BJ (cell line): ENCODE measurements at regions of chr7 and their contacts with region 1.

Region 1: DNA sequence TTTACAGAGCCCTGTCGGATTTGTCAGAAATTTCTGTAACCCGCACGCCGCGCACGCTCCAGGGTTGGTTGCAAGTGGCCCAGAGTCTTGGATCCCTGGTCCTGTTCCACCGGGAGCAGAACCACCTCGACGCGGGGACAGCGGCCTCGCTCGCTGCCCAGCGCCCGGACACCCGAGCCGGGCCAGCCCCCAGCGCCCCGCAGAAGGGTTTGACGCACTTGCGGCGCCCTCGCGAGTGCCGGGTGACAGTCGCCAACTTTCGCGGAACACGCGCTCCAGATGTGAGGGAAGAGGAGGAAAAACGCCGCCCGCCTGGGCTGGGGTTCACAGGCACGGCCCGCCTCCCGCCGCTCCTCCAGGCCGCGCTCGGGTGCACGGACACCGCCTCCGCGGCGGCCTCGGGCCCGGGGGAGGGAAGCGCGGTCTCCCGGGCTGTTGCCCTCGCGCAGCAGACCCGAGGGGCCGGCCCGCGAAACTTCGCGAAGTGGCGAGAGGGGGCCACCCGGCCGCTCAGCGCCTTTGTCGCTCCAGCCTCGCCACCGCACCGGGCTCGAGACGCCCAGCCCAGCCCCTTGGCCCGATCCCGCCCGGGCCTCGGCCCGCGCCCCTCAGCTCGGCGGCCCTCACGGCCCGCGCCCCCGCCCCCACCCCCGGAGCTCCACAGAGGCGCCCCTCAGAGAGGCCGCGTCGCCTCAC is 514 bp downstream of the RNF216 start:
- DNase-seq: no peak
- H3K4me3 ChIP-seq: peak overlapping the region; percentile 74
- H3K27me3 ChIP-seq: no peaks in the 10 kb centered on the region
- CTCF ChIP-seq: no peak

Region 2: GRCh38 chr7:5797716-5798115 is 16.8 kb after region 1 on chr7:
- CTCF ChIA-PET with region 1: interaction called, 10 read pairs
- POLR2A ChIA-PET with region 1: interaction called, 11 read pairs
- DNase-seq: no peak
- H3K4me3 ChIP-seq: no peak overlapping the region
- H3K27me3 ChIP-seq: no peaks in the 10 kb centered on the region
- CTCF ChIP-seq: no peak

Region 3: GRCh38 chr7:6127110-6127490 is 346.2 kb after region 1 on chr7:
- CTCF ChIA-PET with region 1: no interaction called
- POLR2A ChIA-PET with region 1: interaction called, 10 read pairs
- DNase-seq: no peak
- H3K4me3 ChIP-seq: no peak overlapping the region
- H3K27me3 ChIP-seq: no peaks in the 10 kb centered on the region
- CTCF ChIP-seq: no peak

Region 4: DNA sequence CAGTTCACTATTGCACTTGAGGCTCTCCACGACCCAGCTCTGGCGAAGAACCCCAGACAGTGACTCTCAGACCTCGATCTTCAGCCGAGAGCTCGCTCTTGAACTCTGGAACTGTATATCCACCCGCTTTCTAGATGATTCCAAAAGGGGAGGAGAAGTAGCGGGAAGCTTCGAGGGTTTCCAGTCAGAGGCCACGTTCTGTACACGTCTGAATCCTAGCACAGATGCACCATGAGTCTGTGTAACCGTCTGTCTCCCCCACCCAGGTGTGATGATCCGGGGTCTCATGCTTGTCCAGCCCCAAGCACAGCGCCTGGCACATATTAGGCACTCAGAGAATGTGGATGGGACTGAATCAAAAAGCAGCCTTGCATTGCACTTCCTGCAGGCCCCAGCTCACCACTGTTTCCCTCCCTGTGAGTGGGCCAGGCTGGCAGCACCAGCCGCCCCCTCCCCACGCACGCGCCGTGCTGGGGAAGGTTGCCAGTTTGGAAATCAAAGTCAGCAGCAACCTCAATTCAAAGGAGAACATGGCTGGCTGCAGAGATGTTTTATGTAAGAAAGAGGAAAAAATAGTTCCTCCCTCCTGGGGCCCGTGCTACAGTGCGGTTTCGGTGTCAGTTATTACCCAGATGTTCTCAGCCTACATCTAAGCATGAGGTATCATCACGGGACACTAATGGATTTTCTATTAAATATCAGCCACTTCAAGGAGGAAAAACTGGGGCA is 764.6 kb after region 1 on chr7:
- CTCF ChIA-PET with region 1: no interaction called
- POLR2A ChIA-PET with region 1: no interaction called
- DNase-seq: no peak
- H3K4me3 ChIP-seq: no peak overlapping the region
- H3K27me3 ChIP-seq: 0 out of 2 replicates have a peak, but pooled peaks cover 1% of the 10 kb centered on the region
- CTCF ChIP-seq: no peak